Uterus (tissue), 4 donors: ENCODE measurements at regions of chr19 and their contacts with region 1.

Region 1: GRCh38 chr19:9796113-9796773 is 22.6 kb downstream of the FBXL12 start:
- DNase-seq: peak; percentile 82 to 86
- H3K4me3 ChIP-seq: no peak overlapping the region
- H3K27ac ChIP-seq: no peak overlapping the region
- H3K4me1 ChIP-seq: no peaks in the 10 kb centered on the region
- H3K27me3 ChIP-seq: no peaks in the 10 kb centered on the region
- CTCF ChIP-seq: peak; percentile 73 to 91 (median 80)
- POLR2A ChIP-seq: no peak

Region 2: DNA sequence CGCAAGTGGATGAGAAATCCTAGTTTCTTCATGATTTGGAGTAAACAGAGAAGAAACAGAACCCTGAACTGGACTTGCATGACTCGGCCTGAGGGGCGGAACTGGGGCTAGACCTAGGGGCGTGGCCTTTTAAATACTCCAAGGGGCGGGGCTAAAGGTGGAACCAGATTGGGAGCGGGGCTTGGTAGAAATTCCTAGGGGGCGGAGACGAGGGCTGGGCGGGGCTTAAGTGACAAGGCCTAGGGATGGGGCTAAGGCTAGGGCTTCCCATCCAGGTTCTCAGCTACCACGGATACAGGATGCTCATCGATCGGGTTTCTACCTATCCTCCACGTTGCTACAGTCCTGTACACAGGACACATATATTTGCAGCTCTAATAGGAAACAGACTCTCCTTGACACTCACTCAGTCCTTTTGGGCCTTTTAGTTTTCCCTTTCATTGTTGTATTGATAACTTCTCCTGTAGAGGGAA is 486.2 kb before region 1 on chr19:
- intact Hi-C with region 1: loop called (anchors 10 kb)
- DNase-seq: peak; percentile 94 to 96
- H3K4me3 ChIP-seq: peak overlapping the region; percentile 66 to 90
- H3K27ac ChIP-seq: peak overlapping the region; percentile 91 to 95
- H3K4me1 ChIP-seq: no peaks in the 10 kb centered on the region
- H3K27me3 ChIP-seq: no peaks in the 10 kb centered on the region
- CTCF ChIP-seq: no peak
- POLR2A ChIP-seq: no peak

Region 3: GRCh38 chr19:9627856-9628255 is 168.4 kb before region 1 on chr19:
- intact Hi-C with region 1: loop called (anchors 5 kb)
- DNase-seq: no peak
- H3K4me3 ChIP-seq: no peak overlapping the region
- H3K27ac ChIP-seq: no peak overlapping the region
- H3K4me1 ChIP-seq: no peaks in the 10 kb centered on the region
- H3K27me3 ChIP-seq: no peaks in the 10 kb centered on the region
- CTCF ChIP-seq: no peak
- POLR2A ChIP-seq: no peak

Region 4: DNA sequence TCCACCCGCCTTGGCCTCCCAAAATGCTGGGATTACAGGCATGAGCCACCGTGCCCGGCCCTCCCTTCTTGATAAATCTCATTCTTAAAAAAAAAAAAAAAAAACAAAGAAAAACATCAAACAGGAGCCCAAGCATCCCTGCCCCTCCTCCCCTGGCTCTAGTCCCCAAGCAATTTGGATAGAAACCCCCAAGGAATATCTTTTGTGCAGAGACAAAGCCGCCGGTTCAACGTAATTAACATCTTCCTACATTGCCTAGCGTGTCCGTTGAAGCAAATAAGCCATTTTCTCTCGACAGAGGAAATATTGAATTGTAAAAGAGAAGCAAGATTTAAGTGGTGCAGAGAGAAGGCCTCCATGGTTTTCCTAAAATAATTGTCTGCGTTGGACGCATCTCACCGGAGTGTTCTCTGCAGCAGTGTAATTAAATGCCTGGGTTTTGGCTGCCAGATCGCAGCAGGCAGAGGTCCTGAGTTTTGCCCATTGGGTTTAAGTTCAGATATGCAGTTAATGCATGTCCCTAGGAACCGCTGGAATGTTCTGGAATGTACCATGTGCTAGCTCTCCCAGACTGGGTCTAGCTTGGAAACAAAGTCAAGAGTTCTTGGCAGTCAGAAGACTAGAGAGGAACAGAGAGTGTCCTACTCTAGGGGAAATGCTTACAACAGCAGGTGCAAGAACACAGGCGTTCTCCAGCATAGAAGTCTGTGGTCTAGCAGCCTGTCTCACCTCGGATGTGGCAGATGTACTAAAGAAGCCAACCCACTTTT is 69.7 kb after region 1 on chr19:
- intact Hi-C with region 1: no loop called
- DNase-seq: no peak
- H3K4me3 ChIP-seq: no peak overlapping the region
- H3K27ac ChIP-seq: no peak overlapping the region
- H3K4me1 ChIP-seq: no peaks in the 10 kb centered on the region
- H3K27me3 ChIP-seq: no peaks in the 10 kb centered on the region
- CTCF ChIP-seq: no peak
- POLR2A ChIP-seq: no peak

Region 5: GRCh38 chr19:9885077-9885552 is 88.9 kb after region 1 on chr19:
- intact Hi-C with region 1: no loop called
- DNase-seq: peak; percentile 39 to 71
- H3K4me3 ChIP-seq: no peak overlapping the region
- H3K27ac ChIP-seq: no peak overlapping the region
- H3K4me1 ChIP-seq: no peaks in the 10 kb centered on the region
- H3K27me3 ChIP-seq: no peaks in the 10 kb centered on the region
- CTCF ChIP-seq: peak in 3 of 4 experiments; percentile 6 to 58 (median 50)
- POLR2A ChIP-seq: no peak